Endothelial cell of umbilical vein (primary cell): ENCODE measurements at regions of chr2 and their contacts with region 1.

Region 1: GRCh38 chr2:6896930-6897759 is 19.6 kb downstream of the RSAD2 start:
- DNase-seq: peak; percentile 62
- H3K4me3 ChIP-seq: no peak overlapping the region
- H3K27ac ChIP-seq: no peak overlapping the region
- H3K4me1 ChIP-seq: no peaks in the 10 kb centered on the region
- H3K27me3 ChIP-seq: peaks cover 3% of the 10 kb centered on the region in 2 experiments
- CTCF ChIP-seq: peak; percentile 31 to 42
- POLR2A ChIP-seq: no peak

Region 2: DNA sequence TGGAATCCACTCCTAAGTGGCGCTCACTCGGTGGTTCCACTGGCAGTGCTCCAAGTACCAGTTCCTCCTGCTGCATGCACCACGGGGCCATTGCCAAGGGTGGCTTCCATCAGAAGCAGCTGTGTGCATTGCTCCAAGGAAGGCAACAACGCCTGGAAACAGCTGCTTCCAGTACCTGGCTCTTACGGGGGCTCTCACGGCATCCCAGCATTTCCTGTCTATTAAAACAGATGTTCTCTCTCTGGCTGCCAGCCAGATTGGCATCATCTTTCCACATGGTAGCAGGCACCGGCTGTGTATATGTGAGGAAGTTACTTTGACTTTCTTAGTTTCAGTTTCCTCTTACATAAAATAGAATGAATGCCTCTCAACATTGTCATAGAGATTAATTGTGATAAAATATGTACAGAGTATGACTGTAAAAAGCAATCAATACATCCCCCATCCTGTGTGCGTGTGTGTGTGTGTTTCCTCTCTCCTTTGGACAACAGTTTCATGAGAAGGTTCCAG is 116.3 kb before region 1 on chr2:
- CTCF ChIA-PET with region 1: no interaction called
- POLR2A ChIA-PET with region 1: no interaction called
- dilution Hi-C with region 1: no loop called
- intact Hi-C with region 1: no loop called
- DNase-seq: peak; percentile 50
- H3K4me3 ChIP-seq: no peak overlapping the region
- H3K27ac ChIP-seq: peak overlapping the region; percentile 77
- H3K4me1 ChIP-seq: peaks cover 10% of the 10 kb centered on the region
- H3K27me3 ChIP-seq: no peaks in the 10 kb centered on the region
- CTCF ChIP-seq: no peak
- POLR2A ChIP-seq: no peak

Region 3: DNA sequence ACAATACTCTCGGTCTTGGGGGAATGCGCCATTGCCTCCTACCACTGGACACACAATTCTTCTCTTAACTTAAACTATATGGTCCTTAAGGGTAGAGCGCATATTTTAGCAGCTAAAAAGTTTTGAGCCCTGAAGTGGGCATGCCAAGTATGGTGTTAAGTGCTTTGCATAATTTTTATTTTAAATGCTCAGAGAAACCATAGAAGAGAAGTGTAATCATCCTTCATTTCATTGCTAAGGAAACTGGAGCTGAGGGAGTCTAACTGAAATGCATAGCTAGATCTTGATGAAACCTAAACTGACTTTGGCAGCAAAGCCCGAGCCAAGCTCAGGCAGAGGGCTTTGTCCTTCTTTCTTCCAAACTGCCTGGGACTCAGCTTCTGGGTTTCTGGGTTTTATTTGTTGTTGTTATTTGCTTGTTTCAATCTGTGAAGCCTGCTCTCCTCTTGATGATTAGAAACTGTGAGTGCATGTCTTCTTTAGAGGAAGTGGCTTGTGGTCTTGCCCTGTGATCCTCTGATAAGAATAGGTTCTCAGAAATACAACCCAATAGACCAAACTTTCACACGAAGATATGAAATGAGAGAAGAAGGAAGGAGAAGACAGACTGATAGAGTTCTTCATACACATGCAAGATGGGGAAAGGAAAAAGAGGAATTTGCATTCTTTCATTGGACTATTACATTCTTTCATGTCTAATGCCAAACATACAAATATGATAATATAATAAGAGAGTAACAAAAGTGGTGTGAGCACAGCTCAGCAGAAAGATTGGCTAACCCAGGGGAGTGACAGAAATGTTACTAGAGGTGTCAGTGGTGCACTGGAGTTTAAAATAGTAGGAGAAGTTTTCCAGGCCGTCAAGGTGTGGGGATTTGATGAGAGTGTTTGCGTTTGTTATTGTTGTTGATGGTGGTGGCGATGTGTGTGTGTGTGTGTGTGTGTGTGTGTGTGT is 12.6 kb after region 1 on chr2:
- CTCF ChIA-PET with region 1: interaction called, 13 read pairs
- POLR2A ChIA-PET with region 1: no interaction called
- dilution Hi-C with region 1: no loop called
- intact Hi-C with region 1: no loop called
- DNase-seq: no peak
- H3K4me3 ChIP-seq: no peak overlapping the region
- H3K27ac ChIP-seq: no peak overlapping the region
- H3K4me1 ChIP-seq: no peaks in the 10 kb centered on the region
- H3K27me3 ChIP-seq: peaks cover 6 to 10% of the 10 kb centered on the region in 2 experiments
- CTCF ChIP-seq: no peak
- POLR2A ChIP-seq: no peak

Region 4: GRCh38 chr2:6960659-6961058 is 63.5 kb after region 1 on chr2:
- CTCF ChIA-PET with region 1: no interaction called
- POLR2A ChIA-PET with region 1: no interaction called
- dilution Hi-C with region 1: no loop called
- intact Hi-C with region 1: no loop called
- DNase-seq: peak; percentile 78
- H3K4me3 ChIP-seq: no peak overlapping the region
- H3K27ac ChIP-seq: no peak overlapping the region
- H3K4me1 ChIP-seq: no peaks in the 10 kb centered on the region
- H3K27me3 ChIP-seq: no peaks in the 10 kb centered on the region
- CTCF ChIP-seq: no peak
- POLR2A ChIP-seq: no peak

Region 5: DNA sequence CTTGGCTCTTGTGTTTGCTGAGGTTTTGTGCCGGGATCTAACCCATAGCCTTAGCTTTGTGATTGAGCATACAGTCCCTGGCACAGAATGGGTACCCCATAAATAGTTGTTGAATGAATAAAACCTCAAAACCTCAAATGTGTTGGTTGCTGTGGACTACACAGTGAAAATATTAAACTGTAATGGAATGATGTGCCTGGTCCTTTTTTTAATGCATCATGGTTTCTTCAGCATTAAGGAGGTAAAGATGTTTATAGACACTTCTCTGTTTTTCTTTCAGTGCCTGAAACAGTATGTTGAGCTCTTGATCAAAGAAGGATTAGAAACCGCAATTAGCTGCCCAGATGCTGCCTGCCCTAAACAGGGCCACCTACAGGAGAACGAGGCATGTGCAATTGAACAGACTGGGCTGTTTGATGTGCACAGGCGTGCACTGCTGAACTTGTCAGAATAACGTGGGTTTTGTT is 117.1 kb after region 1 on chr2:
- CTCF ChIA-PET with region 1: interaction called, 18 read pairs
- POLR2A ChIA-PET with region 1: no interaction called
- dilution Hi-C with region 1: no loop called
- intact Hi-C with region 1: loop called (anchors 1 kb)
- DNase-seq: no peak
- H3K4me3 ChIP-seq: no peak overlapping the region
- H3K27ac ChIP-seq: no peak overlapping the region
- H3K4me1 ChIP-seq: no peaks in the 10 kb centered on the region
- H3K27me3 ChIP-seq: no peaks in the 10 kb centered on the region
- CTCF ChIP-seq: peak; percentile 21 to 54
- POLR2A ChIP-seq: no peak

Region 6: GRCh38 chr2:7029291-7030059 is 132.3 kb after region 1 on chr2:
- CTCF ChIA-PET with region 1: interaction called, 31 read pairs
- POLR2A ChIA-PET with region 1: no interaction called
- dilution Hi-C with region 1: no loop called
- intact Hi-C with region 1: no loop called
- DNase-seq: no peak
- H3K4me3 ChIP-seq: no peak overlapping the region
- H3K27ac ChIP-seq: no peak overlapping the region
- H3K4me1 ChIP-seq: peaks cover 9% of the 10 kb centered on the region
- H3K27me3 ChIP-seq: no peaks in the 10 kb centered on the region
- CTCF ChIP-seq: no peak
- POLR2A ChIP-seq: no peak

Region 7: DNA sequence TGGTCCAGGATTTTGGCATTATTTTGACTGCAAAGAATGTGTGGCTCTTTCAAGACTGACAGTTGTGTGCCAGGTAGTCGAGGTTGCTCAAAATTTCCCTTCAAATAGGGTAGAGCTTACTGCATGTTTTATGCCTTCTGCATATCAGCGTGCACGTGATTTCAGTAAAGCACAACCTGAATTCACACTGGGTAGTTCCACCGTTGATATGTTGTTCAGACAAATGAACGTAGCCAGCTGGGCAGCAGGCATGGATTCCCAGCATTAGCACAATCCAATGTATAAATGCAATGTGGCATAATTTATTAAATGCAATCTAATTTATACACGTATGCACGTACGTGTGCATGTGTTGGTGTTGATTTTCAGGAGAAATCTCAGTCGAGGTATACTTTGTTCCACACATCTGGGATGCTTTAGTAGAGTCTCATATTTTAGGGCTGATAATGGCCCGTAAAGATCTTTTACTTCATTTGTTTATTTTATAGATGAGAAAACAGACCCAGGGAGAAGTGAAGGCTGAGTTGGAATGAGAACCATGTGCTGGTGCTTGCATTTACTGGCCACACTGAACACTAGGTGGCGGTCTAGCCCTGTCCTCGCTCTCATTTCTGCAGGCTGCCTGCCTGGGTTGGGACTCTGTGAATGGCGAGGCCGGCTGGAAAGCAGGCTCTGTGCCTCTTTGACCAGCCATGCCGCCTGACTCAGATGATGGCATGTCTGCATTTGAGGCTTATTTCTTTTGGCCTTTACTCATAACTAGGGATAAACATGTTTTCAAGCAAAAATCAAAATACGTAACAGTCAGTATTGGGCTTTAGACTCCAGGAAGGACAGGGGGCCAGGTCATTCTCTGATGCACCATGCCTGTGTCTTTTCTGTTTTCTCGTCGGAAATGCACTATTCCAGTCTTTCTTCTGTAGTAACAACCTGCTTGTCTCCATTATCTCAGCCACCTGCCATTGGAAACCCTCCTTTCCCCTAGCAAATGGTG is 140.5 kb after region 1 on chr2:
- CTCF ChIA-PET with region 1: interaction called, 124 read pairs
- POLR2A ChIA-PET with region 1: no interaction called
- dilution Hi-C with region 1: no loop called
- intact Hi-C with region 1: loop called (anchors 2 kb)
- DNase-seq: peak; percentile 52
- H3K4me3 ChIP-seq: no peak overlapping the region
- H3K27ac ChIP-seq: no peak overlapping the region
- H3K4me1 ChIP-seq: no peaks in the 10 kb centered on the region
- H3K27me3 ChIP-seq: no peaks in the 10 kb centered on the region
- CTCF ChIP-seq: peak; percentile 63 to 87
- POLR2A ChIP-seq: no peak

Region 8: DNA sequence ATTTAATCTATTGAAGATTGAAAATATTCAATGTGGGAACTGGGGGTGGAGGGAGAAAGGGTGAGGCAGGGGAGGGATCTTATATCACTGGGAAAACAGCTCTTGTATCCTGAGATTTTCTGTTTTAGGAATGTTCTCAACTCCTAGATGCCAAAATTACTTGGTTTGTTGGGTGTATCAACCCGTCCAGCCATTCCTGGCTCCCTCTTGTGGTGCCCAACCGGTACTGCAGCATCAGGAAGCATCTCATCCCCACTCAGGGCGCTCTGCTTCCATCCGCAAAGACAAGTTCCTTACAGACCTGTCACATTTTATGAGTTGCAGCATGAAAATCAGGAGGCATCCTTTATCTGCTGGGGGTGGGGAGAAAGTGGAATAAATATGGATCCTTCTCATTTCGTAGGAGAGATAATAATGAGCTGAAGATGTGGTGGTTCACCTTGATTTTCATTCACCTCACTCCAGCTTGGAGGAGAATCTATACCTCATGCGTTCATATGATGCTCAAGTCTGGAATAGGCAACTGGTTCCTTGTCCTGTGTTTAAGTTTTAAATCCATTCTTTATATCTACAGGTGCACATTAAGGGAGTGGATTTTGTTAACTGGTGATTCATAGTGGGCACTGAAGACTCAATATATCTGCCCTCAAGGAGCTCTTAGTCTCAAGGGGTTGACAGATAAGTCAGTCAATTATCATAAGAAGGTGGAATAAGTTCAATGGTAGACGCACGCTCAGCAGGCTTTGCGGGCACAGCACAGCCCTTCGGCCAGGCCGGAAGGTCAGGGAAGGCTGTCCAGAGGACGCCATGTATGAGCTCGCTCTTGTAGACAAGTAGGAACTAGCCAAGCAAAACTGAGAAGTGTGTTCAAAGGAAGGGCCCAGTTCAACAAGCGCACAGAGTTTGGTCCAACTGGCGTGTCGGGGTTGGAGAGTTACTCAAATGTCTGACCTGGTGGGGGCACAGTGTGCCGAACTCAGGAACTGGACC is 147.4 kb after region 1 on chr2:
- CTCF ChIA-PET with region 1: interaction called, 124 read pairs
- POLR2A ChIA-PET with region 1: no interaction called
- dilution Hi-C with region 1: no loop called
- intact Hi-C with region 1: loop called (anchors 1 kb)
- DNase-seq: peak; percentile 64
- H3K4me3 ChIP-seq: no peak overlapping the region
- H3K27ac ChIP-seq: no peak overlapping the region
- H3K4me1 ChIP-seq: peaks cover 7% of the 10 kb centered on the region
- H3K27me3 ChIP-seq: no peaks in the 10 kb centered on the region
- CTCF ChIP-seq: peak; percentile 91 to 92
- POLR2A ChIP-seq: no peak

Region 9: GRCh38 chr2:7083577-7084509 is 186.7 kb after region 1 on chr2:
- CTCF ChIA-PET with region 1: interaction called, 30 read pairs
- POLR2A ChIA-PET with region 1: no interaction called
- dilution Hi-C with region 1: no loop called
- intact Hi-C with region 1: loop called (anchors 1 kb)
- DNase-seq: peak; percentile 52
- H3K4me3 ChIP-seq: no peak overlapping the region
- H3K27ac ChIP-seq: no peak overlapping the region
- H3K4me1 ChIP-seq: no peaks in the 10 kb centered on the region
- H3K27me3 ChIP-seq: peaks cover 0 to 2% of the 10 kb centered on the region in 2 experiments
- CTCF ChIP-seq: peak; percentile 57 to 71
- POLR2A ChIP-seq: no peak